ENCODE measurements at regions of chr1 and their contacts with region 1.

Region 1: DNA sequence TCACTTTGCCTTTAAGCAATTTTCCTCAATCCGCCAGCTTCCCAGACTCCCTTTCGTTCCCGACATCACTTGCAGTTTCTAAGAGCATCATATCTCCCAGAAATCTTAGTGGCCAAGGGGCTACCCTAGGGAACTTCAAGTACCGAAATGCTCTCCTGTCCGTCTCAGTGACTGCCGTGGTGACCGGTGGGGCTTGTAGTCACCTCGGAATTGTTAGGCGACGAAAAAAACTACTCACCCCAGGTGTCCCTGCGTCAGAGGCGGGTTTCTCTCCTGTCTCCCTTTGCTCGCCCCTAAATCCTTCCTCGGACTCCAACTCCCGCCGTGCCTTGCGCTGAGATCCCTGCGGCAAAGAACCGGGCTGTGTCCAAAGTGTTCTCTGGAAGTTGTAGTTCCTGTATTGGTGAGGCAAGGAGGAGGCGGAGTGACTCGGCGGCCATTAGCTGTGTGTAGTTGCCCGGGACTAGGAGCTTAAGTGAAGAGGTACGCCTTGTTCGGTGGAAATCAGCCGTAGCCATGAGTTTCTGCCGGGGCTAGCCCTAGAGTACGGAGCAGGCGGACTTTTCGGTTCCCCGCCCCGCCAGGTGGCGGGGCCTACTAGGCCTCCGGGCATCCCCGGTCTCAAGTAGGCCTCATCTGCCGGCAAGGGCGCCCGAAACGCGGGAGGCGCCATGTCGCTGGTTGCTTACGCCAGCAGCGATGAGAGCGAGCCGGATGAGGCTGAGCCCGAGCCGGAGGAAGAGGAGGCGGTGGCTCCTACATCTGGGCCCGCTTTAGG is at the start of gene PRCC:
- DNase-seq: peak; percentile 83 to 100 (median 98)
- ATAC-seq: peak; percentile 94
- H3K4me3 ChIP-seq: peak within 1 kb of the TSS; percentile 89
- H3K4me3 Mint-ChIP-seq: no peak within 1 kb of the TSS
- H3K27ac ChIP-seq: peak within 1 kb of the TSS; percentile 98
- H3K27ac Mint-ChIP-seq: peak within 1 kb of the TSS in 3 of 9 donors; percentile 13 to 91 (median 88)
- H3K4me1 ChIP-seq: peaks cover 23 to 36% of the 10 kb centered on the region in 2 donors
- H3K4me1 Mint-ChIP-seq: peaks cover 35 to 46% (median 37%) of the 10 kb centered on the region in 7 donors
- H3K27me3 ChIP-seq: no peaks in the 10 kb centered on the region
- H3K27me3 Mint-ChIP-seq: no peaks in the 10 kb centered on the region
- total RNA-seq, gene PRCC: 53.2 to 88.9 (median 61.7) TPM

Region 2: GRCh38 chr1:156193488-156194299 is 573.6 kb before region 1 on chr1 and contains the start of gene SLC25A44:
- CTCF ChIA-PET with region 1: no interaction called
- POLR2A ChIA-PET with region 1: no interaction called
- intact Hi-C with region 1: loop called in 1 of 2 experiments (anchors 1 kb)
- DNase-seq: peak; percentile 94 to 98 (median 97)
- ATAC-seq: peak; percentile 99
- H3K4me3 ChIP-seq: peak within 1 kb of the TSS; percentile 92
- H3K4me3 Mint-ChIP-seq: peak within 1 kb of the TSS; percentile 83 to 99 (median 97)
- H3K27ac ChIP-seq: peak within 1 kb of the TSS; percentile 86
- H3K27ac Mint-ChIP-seq: peak within 1 kb of the TSS; percentile 85 to 97 (median 93)
- H3K4me1 ChIP-seq: peaks cover 12 to 31% of the 10 kb centered on the region in 2 donors
- H3K4me1 Mint-ChIP-seq: peaks cover 22 to 53% (median 45%) of the 10 kb centered on the region in 7 donors
- H3K27me3 ChIP-seq: no peaks in the 10 kb centered on the region
- H3K27me3 Mint-ChIP-seq: no peaks in the 10 kb centered on the region
- total RNA-seq, gene SLC25A44: 17.8 to 38.4 (median 19.6) TPM

Region 3: DNA sequence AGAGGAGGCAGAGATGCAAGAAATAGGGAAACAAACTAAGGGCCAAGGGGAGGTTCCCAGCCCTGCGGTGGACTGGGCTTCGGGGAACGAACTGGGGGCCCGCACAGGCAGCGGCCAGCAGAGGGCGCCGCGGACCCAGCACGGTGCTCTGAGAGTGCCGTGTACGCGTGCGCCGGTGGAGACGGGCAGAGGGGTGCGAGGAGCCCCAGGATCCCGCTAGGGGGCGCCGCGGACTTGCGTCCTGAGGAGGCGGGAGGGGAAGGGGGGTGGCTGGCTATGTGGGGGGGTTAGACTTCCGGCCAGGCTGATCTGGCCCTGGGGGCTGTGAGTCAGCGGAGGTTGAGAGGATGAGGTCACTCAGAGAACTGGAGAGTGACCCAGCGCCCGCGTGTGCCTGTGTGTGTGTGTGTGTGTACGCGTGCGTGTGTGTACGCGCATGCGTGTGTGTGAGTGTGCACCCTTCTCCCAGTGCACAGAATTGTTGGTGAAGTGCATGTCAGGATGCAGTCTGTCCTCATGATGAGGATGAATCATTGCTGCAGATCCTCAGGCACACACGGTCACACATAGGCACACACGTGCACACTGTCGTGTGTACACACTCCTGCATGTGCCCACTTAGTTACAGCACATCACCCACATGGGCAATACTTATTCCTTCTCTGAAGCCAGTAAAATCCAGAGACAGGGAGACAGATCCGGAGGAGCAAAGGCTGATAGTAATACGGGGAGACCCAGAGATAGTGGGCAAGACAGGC is 107.1 kb before region 1 on chr1:
- CTCF ChIA-PET with region 1: no interaction called
- POLR2A ChIA-PET with region 1: no interaction called
- intact Hi-C with region 1: loop called (anchors 1 kb)
- DNase-seq: peak; percentile 82 to 96 (median 89)
- ATAC-seq: peak; percentile 95
- H3K4me3 ChIP-seq: no peak overlapping the region
- H3K4me3 Mint-ChIP-seq: peak overlapping the region in 9 of 10 donors; percentile 4 to 90 (median 48)
- H3K27ac ChIP-seq: no peak overlapping the region
- H3K27ac Mint-ChIP-seq: peak overlapping the region in 8 of 9 donors; percentile 53 to 87 (median 69)
- H3K4me1 ChIP-seq: peaks cover 32 to 39% of the 10 kb centered on the region in 2 donors
- H3K4me1 Mint-ChIP-seq: peaks cover 33 to 62% (median 44%) of the 10 kb centered on the region in 7 donors
- H3K27me3 ChIP-seq: peaks cover 0 to 13% of the 10 kb centered on the region in 2 donors
- H3K27me3 Mint-ChIP-seq: peaks cover 18 to 30% (median 24%) of the 10 kb centered on the region in 5 donors

Region 4: GRCh38 chr1:156740679-156741612 is 26.3 kb before region 1 on chr1 and contains the start of gene MRPL24:
- CTCF ChIA-PET with region 1: interaction called, 4 read pairs
- POLR2A ChIA-PET with region 1: interaction called, 53 read pairs
- intact Hi-C with region 1: loop called (anchors 1 kb)
- DNase-seq: peak; percentile 84 to 99 (median 98)
- ATAC-seq: peak; percentile 95
- H3K4me3 ChIP-seq: peak within 1 kb of the TSS; percentile 79
- H3K4me3 Mint-ChIP-seq: peak within 1 kb of the TSS; percentile 94 to 99 (median 98)
- H3K27ac ChIP-seq: peak within 1 kb of the TSS; percentile 90
- H3K27ac Mint-ChIP-seq: peak within 1 kb of the TSS; percentile 86 to 99 (median 98)
- H3K4me1 ChIP-seq: peaks cover 17 to 20% of the 10 kb centered on the region in 2 donors
- H3K4me1 Mint-ChIP-seq: peaks cover 23 to 50% (median 40%) of the 10 kb centered on the region in 7 donors
- H3K27me3 ChIP-seq: no peaks in the 10 kb centered on the region
- H3K27me3 Mint-ChIP-seq: no peaks in the 10 kb centered on the region
- total RNA-seq, gene MRPL24: 19.1 to 68.9 (median 47.2) TPM

Region 5: DNA sequence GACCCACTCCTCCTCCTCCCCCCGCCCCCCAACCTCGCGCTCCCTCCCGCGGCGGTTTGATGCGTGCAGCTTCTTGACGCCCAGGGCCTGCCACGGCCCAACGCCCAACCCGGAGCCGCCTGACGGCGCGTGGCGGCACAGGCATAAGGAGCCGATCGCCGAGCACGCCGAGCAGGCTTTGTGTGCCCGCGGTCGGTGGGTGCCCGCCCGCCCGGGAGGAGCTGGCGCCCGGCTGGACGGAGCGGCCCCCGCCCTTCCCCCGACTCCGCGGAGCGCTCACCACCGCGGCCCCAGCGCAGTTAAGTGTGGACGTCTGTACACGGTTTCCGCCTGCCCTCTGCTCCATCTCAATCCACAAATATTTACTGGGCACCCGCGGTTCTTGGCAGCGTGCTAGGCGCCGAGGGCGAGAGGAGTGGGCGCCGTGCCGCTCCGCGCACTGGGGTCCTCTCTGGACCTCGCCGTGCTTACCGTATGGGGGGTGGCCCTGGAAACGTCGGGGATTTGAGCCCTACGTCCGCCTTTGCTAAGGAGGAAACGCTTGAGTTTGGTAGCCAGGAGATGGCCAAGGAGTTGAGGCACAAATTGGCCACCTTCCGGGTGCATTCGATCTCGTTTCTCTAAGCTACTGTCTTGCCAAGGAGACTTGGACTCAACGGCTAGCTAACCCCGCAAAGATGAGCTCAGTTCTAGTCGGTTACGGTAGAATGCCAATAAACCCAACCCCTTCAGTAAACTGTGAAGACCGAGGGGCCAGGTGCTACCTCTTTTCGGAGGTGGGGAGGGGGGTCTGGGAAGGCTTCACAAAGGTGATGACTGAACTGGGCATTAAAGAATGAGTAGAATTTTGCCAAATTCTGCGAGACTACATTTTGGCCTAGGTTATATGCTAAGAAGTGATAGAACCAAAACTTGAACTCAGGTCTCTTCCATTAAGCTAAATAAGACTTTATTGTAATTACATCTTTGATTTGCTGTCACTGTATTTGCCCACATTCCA is 15.2 kb before region 1 on chr1:
- CTCF ChIA-PET with region 1: interaction called, 3 read pairs
- POLR2A ChIA-PET with region 1: interaction called, 42 read pairs
- intact Hi-C with region 1: loop called (anchors 1 kb)
- DNase-seq: peak; percentile 83 to 98 (median 92)
- ATAC-seq: peak; percentile 96
- H3K4me3 ChIP-seq: peak overlapping the region; percentile 93
- H3K4me3 Mint-ChIP-seq: peak overlapping the region; percentile 88 to 98 (median 92)
- H3K27ac ChIP-seq: peak overlapping the region; percentile 90
- H3K27ac Mint-ChIP-seq: peak overlapping the region; percentile 82 to 96 (median 90)
- H3K4me1 ChIP-seq: peaks cover 36 to 38% of the 10 kb centered on the region in 2 donors
- H3K4me1 Mint-ChIP-seq: peaks cover 38 to 57% (median 45%) of the 10 kb centered on the region in 7 donors
- H3K27me3 ChIP-seq: no peaks in the 10 kb centered on the region
- H3K27me3 Mint-ChIP-seq: no peaks in the 10 kb centered on the region

Region 6: GRCh38 chr1:156860113-156860627 is 92.9 kb after region 1 on chr1:
- CTCF ChIA-PET with region 1: interaction called, 3 read pairs
- POLR2A ChIA-PET with region 1: no interaction called
- intact Hi-C with region 1: loop called in 1 of 2 experiments (anchors 1 kb)
- DNase-seq: peak; percentile 21 to 77 (median 45)
- ATAC-seq: peak; percentile 71
- H3K4me3 ChIP-seq: peak overlapping the region; percentile 68
- H3K4me3 Mint-ChIP-seq: peak overlapping the region; percentile 70 to 92 (median 83)
- H3K27ac ChIP-seq: no peak overlapping the region
- H3K27ac Mint-ChIP-seq: peak overlapping the region in 5 of 9 donors; percentile 13 to 73 (median 59)
- H3K4me1 ChIP-seq: peaks cover 5 to 20% of the 10 kb centered on the region in 2 donors
- H3K4me1 Mint-ChIP-seq: peaks cover 17 to 64% (median 24%) of the 10 kb centered on the region in 7 donors
- H3K27me3 ChIP-seq: peaks cover 12 to 31% of the 10 kb centered on the region in 2 donors
- H3K27me3 Mint-ChIP-seq: peaks cover 43 to 53% (median 51%) of the 10 kb centered on the region in 5 donors